ENCODE measurements at regions of chr15 and their contacts with region 1.

Region 1: GRCh38 chr15:84658080-84658787 is at the start of gene NMB:
- DNase-seq: peak; percentile 73
- H3K4me3 Mint-ChIP-seq: peak within 1 kb of the TSS; percentile 73
- H3K27ac Mint-ChIP-seq: peak within 1 kb of the TSS; percentile 56
- H3K4me1 Mint-ChIP-seq: peaks cover 26% of the 10 kb centered on the region
- H3K27me3 Mint-ChIP-seq: peaks cover 2% of the 10 kb centered on the region
- total RNA-seq, gene NMB: 3.0 and 3.5 TPM in 2 replicates

Region 2: GRCh38 chr15:84588053-84588874 is 70.0 kb before region 1 on chr15:
- intact Hi-C with region 1: loop called (anchors 1 kb)
- DNase-seq: peak; percentile 78
- H3K4me3 Mint-ChIP-seq: peak overlapping the region; percentile 62
- H3K27ac Mint-ChIP-seq: no peak overlapping the region
- H3K4me1 Mint-ChIP-seq: peaks cover 7% of the 10 kb centered on the region
- H3K27me3 Mint-ChIP-seq: peaks cover 21% of the 10 kb centered on the region

Region 3: GRCh38 chr15:84633311-84634227 is 24.7 kb before region 1 on chr15:
- intact Hi-C with region 1: loop called (anchors 1 kb)
- DNase-seq: peak; percentile 60
- H3K4me3 Mint-ChIP-seq: peak overlapping the region; percentile 95
- H3K27ac Mint-ChIP-seq: peak overlapping the region; percentile 98
- H3K4me1 Mint-ChIP-seq: peaks cover 57% of the 10 kb centered on the region
- H3K27me3 Mint-ChIP-seq: no peaks in the 10 kb centered on the region

Region 4: GRCh38 chr15:84716036-84716799 is 58.0 kb after region 1 on chr15 and contains the start of gene SEC11A:
- intact Hi-C with region 1: loop called (anchors 1 kb)
- DNase-seq: peak; percentile 91
- H3K4me3 Mint-ChIP-seq: peak within 1 kb of the TSS; percentile 94
- H3K27ac Mint-ChIP-seq: peak within 1 kb of the TSS; percentile 96
- H3K4me1 Mint-ChIP-seq: peaks cover 59% of the 10 kb centered on the region
- H3K27me3 Mint-ChIP-seq: no peaks in the 10 kb centered on the region
- total RNA-seq, gene SEC11A: 97.3 and 105 TPM in 2 replicates

Region 5: DNA sequence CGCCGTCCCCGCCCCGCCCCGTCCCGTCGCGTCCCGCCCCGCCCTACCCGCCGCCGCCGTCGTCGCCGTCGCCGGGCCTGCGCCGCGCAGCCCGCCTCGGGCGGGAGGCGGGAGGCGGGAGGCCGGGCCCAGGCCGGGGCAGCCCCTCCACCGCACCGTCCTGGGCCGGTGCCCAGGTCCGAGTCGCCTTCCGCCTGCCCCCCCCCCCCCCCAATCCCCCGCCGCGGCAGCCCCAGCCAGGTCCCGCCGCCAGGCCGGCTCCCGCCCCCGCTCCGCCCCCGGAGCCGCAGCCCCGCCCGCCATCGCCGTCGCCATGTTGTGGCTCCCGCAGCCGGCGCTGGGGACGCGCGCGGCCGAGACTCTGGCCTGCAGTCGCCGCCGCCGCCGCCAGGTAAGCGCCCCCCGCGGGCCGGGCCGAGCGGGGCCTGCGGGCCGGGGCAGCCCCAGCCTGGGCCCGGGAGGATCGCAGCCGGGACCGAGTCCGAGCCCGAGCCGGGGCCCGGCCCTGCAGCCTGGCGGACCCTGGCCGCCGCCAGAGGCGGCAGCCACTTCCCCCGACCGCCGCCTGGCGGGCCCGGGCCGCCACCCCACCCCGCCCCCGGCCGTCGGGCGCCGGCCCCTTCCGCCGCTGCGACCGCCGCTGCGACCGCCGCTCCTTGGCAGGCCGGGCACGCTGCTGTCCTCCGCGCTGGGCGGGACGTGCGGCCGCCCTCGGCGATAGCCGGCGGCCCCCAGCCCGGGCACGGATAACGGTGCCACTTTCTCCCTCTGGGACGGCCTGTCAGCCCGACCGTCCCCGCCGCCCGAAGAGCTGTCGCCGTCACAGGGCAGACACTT is 90.3 kb after region 1 on chr15 and contains the start of gene ZNF592:
- intact Hi-C with region 1: loop called (anchors 1 kb)
- DNase-seq: peak; percentile 75
- H3K4me3 Mint-ChIP-seq: peak within 1 kb of the TSS; percentile 91
- H3K27ac Mint-ChIP-seq: peak within 1 kb of the TSS; percentile 95
- H3K4me1 Mint-ChIP-seq: peaks cover 56% of the 10 kb centered on the region
- H3K27me3 Mint-ChIP-seq: no peaks in the 10 kb centered on the region
- total RNA-seq, gene ZNF592: 29.9 and 30.9 TPM in 2 replicates

Region 6: GRCh38 chr15:84883433-84883832 is 225.2 kb after region 1 on chr15:
- intact Hi-C with region 1: loop called (anchors 1 kb)
- DNase-seq: no peak
- H3K4me3 Mint-ChIP-seq: no peak overlapping the region
- H3K27ac Mint-ChIP-seq: no peak overlapping the region
- H3K4me1 Mint-ChIP-seq: no peaks in the 10 kb centered on the region
- H3K27me3 Mint-ChIP-seq: no peaks in the 10 kb centered on the region